Activated T-helper 2 cell treated with anti-CD3 and anti-CD28 coated beads, Interferon-gamma antibody, Interleukin-2, Interleukin-4, amounts not matched to agents 10 μg/mL and 5 μg/mL and 100 μg/mL, durations not matched to agents 14 hours and 24 hours and 36 hours (primary cell): ENCODE measurements at regions of chr10 and their contacts with region 1.

Region 1: DNA sequence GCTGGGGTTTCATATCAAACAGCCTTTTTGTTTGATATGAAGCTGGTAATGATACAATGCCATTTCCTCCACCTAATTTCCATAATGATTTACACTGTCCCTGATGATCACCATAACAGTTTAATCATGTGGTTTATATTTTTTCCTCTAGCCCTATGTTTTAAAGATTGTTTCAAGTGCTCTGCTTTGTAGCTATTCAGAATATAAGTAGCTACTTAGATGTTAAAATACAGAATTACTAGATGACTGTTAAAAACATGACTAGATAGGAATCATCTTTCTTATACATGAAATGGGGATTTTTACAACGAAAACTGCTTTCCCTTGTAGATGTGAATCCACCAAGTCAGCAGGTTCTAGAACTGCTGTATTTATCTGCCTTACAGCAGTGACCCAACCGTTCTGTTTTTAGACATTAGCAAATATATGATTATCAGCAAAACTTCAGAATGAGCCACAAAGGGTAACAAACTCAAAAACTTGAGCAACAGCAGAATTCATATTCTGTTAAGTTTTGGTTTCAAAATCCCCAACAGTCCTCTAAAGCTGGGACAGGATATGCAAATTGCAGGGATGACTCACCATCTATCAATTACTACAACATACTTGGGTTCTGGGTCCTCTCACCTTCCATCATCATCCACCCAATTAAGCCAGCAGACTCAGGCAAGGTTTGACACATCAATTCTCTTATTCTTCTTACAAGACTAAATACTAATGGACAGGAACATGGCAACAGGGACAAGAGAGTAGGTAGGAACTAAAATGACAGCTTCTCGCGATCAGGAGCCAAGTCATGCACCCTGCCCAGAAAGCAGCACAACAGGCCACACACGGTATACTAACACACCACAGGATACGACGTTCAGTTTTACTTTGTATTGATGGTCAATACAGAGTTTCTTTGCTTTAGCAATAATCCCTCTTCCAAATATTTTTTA is 83.9 kb downstream of the PIP4K2A start:
- DNase-seq: peak; percentile 41
- H3K4me3 Mint-ChIP-seq: peak overlapping the region; percentile 70
- H3K27ac Mint-ChIP-seq: peak overlapping the region; percentile 95
- H3K4me1 Mint-ChIP-seq: peaks cover 87% of the 10 kb centered on the region
- H3K27me3 Mint-ChIP-seq: no peaks in the 10 kb centered on the region

Region 2: GRCh38 chr10:22369434-22370072 is 261.0 kb before region 1 on chr10:
- intact Hi-C with region 1: loop called (anchors 10 kb)
- DNase-seq: no peak
- H3K4me3 Mint-ChIP-seq: no peak overlapping the region
- H3K27ac Mint-ChIP-seq: no peak overlapping the region
- H3K4me1 Mint-ChIP-seq: peaks cover 42% of the 10 kb centered on the region
- H3K27me3 Mint-ChIP-seq: no peaks in the 10 kb centered on the region

Region 3: DNA sequence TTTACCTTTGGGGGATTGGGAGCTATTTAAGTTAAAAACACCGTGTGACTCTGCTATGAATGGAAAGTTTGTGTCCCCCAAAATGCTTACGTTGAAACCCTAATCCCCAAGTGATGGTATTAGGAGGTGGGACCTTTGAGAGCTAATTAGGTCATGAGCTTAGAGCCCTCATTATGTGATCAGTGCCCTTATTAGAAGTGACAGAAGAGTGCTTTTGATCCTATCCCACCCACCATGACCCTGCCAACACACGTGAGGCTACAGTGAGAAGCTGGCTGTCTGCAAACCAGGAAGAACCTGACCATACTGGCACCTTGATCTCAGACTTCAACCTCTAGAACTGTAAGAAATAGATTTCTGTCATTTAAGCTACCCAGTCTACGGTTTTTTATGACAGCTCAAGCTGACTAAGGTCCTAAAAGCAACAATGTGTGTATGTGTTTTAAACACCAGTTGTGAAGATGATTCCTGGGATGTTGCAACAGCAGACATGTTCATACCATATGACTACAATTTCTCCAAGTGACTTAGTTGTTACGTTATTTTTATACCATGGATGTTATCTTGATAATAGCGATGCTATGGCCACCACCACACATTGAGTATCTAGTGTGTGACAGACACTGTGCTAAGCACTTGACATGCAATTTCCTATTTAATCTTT is 40.5 kb before region 1 on chr10:
- intact Hi-C with region 1: no loop called
- DNase-seq: no peak
- H3K4me3 Mint-ChIP-seq: no peak overlapping the region
- H3K27ac Mint-ChIP-seq: no peak overlapping the region
- H3K4me1 Mint-ChIP-seq: peaks cover 4% of the 10 kb centered on the region
- H3K27me3 Mint-ChIP-seq: no peaks in the 10 kb centered on the region

Region 4: GRCh38 chr10:22615819-22616499 is 14.5 kb before region 1 on chr10:
- intact Hi-C with region 1: loop called (anchors 1 kb)
- DNase-seq: no peak
- H3K4me3 Mint-ChIP-seq: peak overlapping the region; percentile 23
- H3K27ac Mint-ChIP-seq: peak overlapping the region; percentile 45
- H3K4me1 Mint-ChIP-seq: peaks cover 83% of the 10 kb centered on the region
- H3K27me3 Mint-ChIP-seq: no peaks in the 10 kb centered on the region

Region 5: GRCh38 chr10:22648547-22648961 is 18.1 kb after region 1 on chr10:
- intact Hi-C with region 1: loop called (anchors 1 kb)
- DNase-seq: no peak
- H3K4me3 Mint-ChIP-seq: no peak overlapping the region
- H3K27ac Mint-ChIP-seq: peak overlapping the region; percentile 98
- H3K4me1 Mint-ChIP-seq: peaks cover 86% of the 10 kb centered on the region
- H3K27me3 Mint-ChIP-seq: no peaks in the 10 kb centered on the region

Region 6: GRCh38 chr10:22666287-22667092 is 36.0 kb after region 1 on chr10:
- intact Hi-C with region 1: loop called (anchors 5 kb)
- DNase-seq: peak; percentile 51
- H3K4me3 Mint-ChIP-seq: peak overlapping the region; percentile 74
- H3K27ac Mint-ChIP-seq: peak overlapping the region; percentile 82
- H3K4me1 Mint-ChIP-seq: peaks cover 56% of the 10 kb centered on the region
- H3K27me3 Mint-ChIP-seq: no peaks in the 10 kb centered on the region

Region 7: DNA sequence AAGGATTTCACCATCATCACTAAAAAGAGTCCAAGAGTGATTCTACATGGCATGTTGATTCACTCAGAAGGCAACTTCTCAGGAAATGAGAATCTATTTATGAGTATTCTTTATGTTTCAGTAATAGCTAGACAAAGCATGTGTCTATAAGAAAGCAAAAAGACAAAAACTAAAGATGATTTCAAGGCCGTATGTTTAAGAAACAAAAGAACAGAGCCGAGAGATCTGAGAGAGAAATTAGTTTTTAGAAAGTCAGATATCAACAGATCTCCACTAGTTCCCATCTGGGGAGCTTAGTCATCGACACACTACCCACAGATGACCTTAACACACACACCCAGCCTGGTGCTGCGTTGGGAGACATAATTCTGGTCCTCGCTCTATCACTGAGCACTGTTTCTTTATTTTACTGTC is 62.9 kb after region 1 on chr10:
- intact Hi-C with region 1: loop called (anchors 1 kb)
- DNase-seq: no peak
- H3K4me3 Mint-ChIP-seq: peak overlapping the region; percentile 73
- H3K27ac Mint-ChIP-seq: peak overlapping the region; percentile 93
- H3K4me1 Mint-ChIP-seq: peaks cover 69% of the 10 kb centered on the region
- H3K27me3 Mint-ChIP-seq: no peaks in the 10 kb centered on the region